Gastrocnemius medialis (tissue), 4 donors: ENCODE measurements at regions of chr3 and their contacts with region 1.

Region 1: GRCh38 chr3:146577662-146578061 is 27.5 kb downstream of the PLSCR5 start:
- DNase-seq: no peak
- ATAC-seq: no peak
- H3K4me3 ChIP-seq: no peak overlapping the region
- H3K27ac ChIP-seq: no peak overlapping the region
- H3K4me1 ChIP-seq: no peaks in the 10 kb centered on the region
- H3K27me3 ChIP-seq: no peaks in the 10 kb centered on the region
- CTCF ChIP-seq: peak in 2 of 5 experiments; percentile 12 to 24
- POLR2A ChIP-seq: no peak

Region 2: GRCh38 chr3:146218880-146219866 is 358.5 kb before region 1 on chr3:
- in situ Hi-C with region 1: loop called (anchors 10 to 25 kb)
- intact Hi-C with region 1: loop called (anchors 10 kb)
- DNase-seq: no peak
- ATAC-seq: no peak
- H3K4me3 ChIP-seq: no peak overlapping the region
- H3K27ac ChIP-seq: no peak overlapping the region
- H3K4me1 ChIP-seq: peaks cover 0 to 3% of the 10 kb centered on the region in 2 donors
- H3K27me3 ChIP-seq: no peaks in the 10 kb centered on the region
- CTCF ChIP-seq: peak; percentile 40 to 67 (median 47)
- POLR2A ChIP-seq: no peak

Region 3: DNA sequence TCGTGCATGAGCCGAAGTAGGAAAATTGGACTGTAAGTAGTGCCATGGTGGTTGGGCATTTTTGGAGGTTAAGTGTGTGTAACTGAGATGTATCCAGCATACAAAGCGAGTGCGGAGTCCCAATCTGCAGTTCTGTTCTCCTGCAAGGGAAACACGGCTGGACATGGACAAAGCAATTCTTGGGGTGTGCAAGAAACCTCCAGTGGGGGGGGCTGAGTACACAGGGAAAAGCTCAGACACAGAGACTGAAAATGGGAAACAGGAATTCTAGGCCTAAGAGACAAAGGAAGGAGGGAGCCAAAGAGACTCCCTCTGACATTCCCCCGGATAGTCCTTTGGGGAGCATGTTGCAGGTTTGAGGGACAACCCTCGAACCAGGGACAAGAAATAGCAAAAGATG is 243.5 kb before region 1 on chr3:
- in situ Hi-C with region 1: loop called (anchors 10 to 25 kb)
- intact Hi-C with region 1: loop called (anchors 5 kb)
- DNase-seq: no peak
- ATAC-seq: no peak
- H3K4me3 ChIP-seq: no peak overlapping the region
- H3K27ac ChIP-seq: no peak overlapping the region
- H3K4me1 ChIP-seq: no peaks in the 10 kb centered on the region
- H3K27me3 ChIP-seq: no peaks in the 10 kb centered on the region
- CTCF ChIP-seq: no peak
- POLR2A ChIP-seq: no peak